K562 (cell line): ENCODE measurements at regions of chr1 and their contacts with region 1.

Region 1: DNA sequence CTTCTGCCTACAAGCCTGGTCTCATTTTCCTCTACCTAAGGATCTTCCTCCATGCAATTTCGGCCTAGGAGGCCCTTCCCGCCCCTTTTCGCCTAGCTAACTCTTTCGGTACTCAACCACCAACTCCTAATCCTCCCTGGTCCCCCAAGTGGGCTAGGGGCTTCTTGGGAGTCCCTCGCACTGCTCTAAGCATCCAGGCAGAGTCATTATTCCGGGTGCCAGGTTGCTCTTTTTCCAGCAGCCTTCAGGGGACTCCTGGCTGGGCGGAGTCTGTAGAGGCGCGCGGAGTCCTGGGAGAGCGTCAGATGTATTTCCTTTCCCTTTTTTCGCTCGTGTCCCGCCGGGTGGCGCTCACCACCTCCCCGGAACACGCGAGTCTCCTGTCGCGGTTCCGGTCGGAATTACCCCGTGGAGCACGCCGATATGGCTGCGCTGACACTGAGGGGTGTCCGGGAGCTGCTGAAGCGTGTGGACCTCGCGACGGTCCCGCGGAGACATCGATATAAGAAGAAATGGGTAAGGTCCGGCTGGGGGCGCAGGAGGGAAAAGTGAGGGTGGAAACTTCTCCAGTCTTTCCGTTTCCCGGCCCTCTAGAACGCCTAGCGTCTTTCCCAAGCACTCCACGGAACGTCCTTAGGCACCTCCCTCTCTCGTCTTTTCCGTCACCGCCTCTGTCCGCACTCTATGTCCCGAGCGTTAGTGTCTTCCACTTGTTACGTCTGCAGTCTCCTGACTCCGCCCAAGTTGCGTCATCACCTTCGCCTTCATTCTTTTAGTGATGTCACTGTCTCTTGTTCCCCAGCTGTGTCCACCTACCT is at the start of gene NSUN4:
- DNase-seq: peak; percentile 91 to 98 (median 92)
- ATAC-seq: peak; percentile 93
- H3K4me3 ChIP-seq: peak within 1 kb of the TSS; percentile 56
- H3K27ac ChIP-seq: peak within 1 kb of the TSS; percentile 96
- H3K4me1 ChIP-seq: peaks cover 22 to 26% of the 10 kb centered on the region in 2 experiments
- H3K27me3 ChIP-seq: no peaks in the 10 kb centered on the region
- CTCF ChIP-seq: peak; percentile 91 to 97 (median 92)
- EP300 ChIP-seq: peak; percentile 55
- POLR2A ChIP-seq: peak; percentile 98
- RAD21 ChIP-seq: peak; percentile 38 to 43
- polyA plus RNA-seq, gene NSUN4: 47.3 to 54.9 TPM

Region 2: GRCh38 chr1:46223472-46223943 is 117.1 kb before region 1 on chr1:
- CTCF ChIA-PET with region 1: no interaction called
- POLR2A ChIA-PET with region 1: interaction called, 4 read pairs
- in situ Hi-C with region 1: no loop called
- intact Hi-C with region 1: loop called (anchors 5 kb)
- DNase-seq: peak; percentile 69 to 91 (median 77)
- ATAC-seq: peak; percentile 97
- H3K4me3 ChIP-seq: no peak overlapping the region
- H3K27ac ChIP-seq: no peak overlapping the region
- H3K4me1 ChIP-seq: peaks cover 0 to 5% of the 10 kb centered on the region in 2 experiments; a peak in 2 of 5 replicates
- H3K27me3 ChIP-seq: no peaks in the 10 kb centered on the region
- CTCF ChIP-seq: peak; percentile 95 to 99 (median 97)
- EP300 ChIP-seq: no peak
- POLR2A ChIP-seq: no peak
- RAD21 ChIP-seq: peak; percentile 90 to 94

Region 3: DNA sequence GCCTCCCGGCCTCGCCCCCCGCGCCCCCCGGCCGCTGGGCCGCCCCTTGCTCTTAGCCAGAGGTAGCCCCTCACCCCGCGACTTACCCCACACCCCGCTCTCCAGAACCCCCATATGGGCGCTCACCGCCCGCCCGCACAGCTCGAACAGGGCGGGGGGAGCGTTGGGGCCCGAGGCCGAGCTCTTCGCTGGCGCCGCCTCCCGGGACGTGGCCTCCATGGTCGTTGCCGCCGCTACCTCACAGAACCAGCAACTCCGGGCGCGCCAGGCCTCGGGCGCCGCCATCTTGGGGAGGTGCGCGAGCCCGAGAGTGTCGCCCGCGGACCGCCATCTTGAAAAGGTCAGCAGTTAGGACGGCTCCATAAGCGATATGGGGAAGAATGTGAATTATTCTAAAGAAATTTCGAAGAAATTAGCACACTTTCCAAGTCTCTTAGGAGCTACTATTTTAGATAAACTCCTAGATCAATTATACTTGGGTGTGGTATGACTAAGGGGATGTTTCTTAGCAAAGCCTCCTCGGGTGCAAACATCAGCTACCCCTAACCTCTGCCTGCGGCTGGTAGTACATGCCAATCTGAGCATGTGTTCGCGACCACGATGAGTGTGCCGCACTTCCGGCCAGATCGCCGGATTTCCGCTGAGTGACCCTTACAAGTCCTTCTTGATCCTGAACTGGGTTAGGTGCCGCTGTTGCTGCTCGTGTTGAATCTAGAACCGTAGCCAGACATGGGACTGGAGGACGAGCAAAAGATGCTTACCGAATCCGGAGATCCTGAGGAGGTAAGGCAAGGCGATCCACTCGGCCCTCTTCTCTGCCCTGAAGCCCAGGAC is 37.4 kb before region 1 on chr1 and contains the starts of genes LRRC41 and UQCRH:
- CTCF ChIA-PET with region 1: no interaction called
- POLR2A ChIA-PET with region 1: interaction called, 18 read pairs
- in situ Hi-C with region 1: no loop called
- intact Hi-C with region 1: loop called (anchors 1 kb)
- DNase-seq: peak; percentile 87 to 100 (median 92)
- ATAC-seq: peak; percentile 80
- H3K4me3 ChIP-seq: peak within 1 kb of the TSS; percentile 76
- H3K27ac ChIP-seq: peak within 1 kb of the TSS; percentile 96
- H3K4me1 ChIP-seq: peaks cover 36 to 44% of the 10 kb centered on the region in 2 experiments; a peak in 4 of 5 replicates
- H3K27me3 ChIP-seq: no peaks in the 10 kb centered on the region
- CTCF ChIP-seq: peak; percentile 20 to 46 (median 46); a peak in 3 of 6 replicates
- EP300 ChIP-seq: peak; percentile 15
- POLR2A ChIP-seq: peak; percentile 98
- RAD21 ChIP-seq: 0 out of 4 replicates have a peak, but pooled peaks of 1 of the 2 experiments have one; percentile 2
- polyA plus RNA-seq, gene LRRC41: 10.5 to 11.7 TPM
- polyA plus RNA-seq, gene UQCRH: 4,348 to 5,184 TPM

Region 4: GRCh38 chr1:46352363-46352762 is 11.8 kb after region 1 on chr1:
- CTCF ChIA-PET with region 1: interaction called, 3 read pairs
- POLR2A ChIA-PET with region 1: interaction called, 11 read pairs
- in situ Hi-C with region 1: no loop called
- intact Hi-C with region 1: no loop called
- DNase-seq: no peak
- ATAC-seq: no peak
- H3K4me3 ChIP-seq: no peak overlapping the region
- H3K27ac ChIP-seq: no peak overlapping the region
- H3K4me1 ChIP-seq: peaks cover 0 to 7% of the 10 kb centered on the region in 2 experiments; a peak in 3 of 5 replicates
- H3K27me3 ChIP-seq: no peaks in the 10 kb centered on the region
- CTCF ChIP-seq: no peak
- EP300 ChIP-seq: no peak
- POLR2A ChIP-seq: 0 out of 2 replicates have a peak, but pooled peaks have one; percentile 51
- RAD21 ChIP-seq: no peak

Region 5: DNA sequence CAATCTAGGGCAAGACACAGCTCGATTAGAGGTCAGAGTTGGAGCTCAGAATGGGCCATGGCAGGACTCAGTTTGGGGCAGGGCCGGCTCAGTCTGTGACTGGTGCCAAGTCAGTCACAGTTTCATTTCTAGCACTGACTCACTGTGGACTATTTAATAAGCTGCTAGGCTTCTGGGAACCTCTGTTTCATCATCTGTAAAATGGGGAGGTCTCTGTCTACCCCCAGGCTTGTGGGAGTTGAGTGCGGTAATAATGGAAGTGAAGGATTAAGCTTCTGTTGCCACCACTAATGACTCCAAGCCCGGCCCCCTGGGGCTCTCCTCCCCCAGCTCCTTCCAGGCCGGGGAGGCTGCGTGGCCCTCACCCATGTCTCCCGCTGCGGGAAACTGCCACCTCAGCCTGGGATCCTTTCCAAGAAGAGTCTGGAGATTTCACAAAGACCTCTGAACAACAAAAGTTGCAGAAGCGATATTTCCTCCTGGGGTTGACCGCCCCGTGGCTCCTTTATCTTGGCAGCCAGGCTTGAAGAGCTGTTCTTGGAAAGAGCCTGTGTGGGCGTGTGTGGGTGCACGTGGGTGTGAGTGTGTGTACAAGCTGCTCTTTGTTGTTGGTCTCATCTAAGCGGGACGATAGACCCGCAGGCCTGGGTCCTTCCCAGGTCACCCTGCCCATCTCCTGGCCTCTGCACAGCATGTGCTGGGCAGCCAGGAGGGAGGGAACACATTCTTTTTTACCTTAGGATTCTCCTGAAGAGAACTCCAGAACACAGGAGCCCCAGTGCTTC is 181.8 kb after region 1 on chr1:
- CTCF ChIA-PET with region 1: no interaction called
- POLR2A ChIA-PET with region 1: no interaction called
- in situ Hi-C with region 1: no loop called
- intact Hi-C with region 1: loop called (anchors 2 kb)
- DNase-seq: peak; percentile 89 to 99 (median 93)
- ATAC-seq: peak; percentile 77
- H3K4me3 ChIP-seq: no peak overlapping the region
- H3K27ac ChIP-seq: peak overlapping the region; percentile 85
- H3K4me1 ChIP-seq: peaks cover 89 to 95% of the 10 kb centered on the region in 2 experiments
- H3K27me3 ChIP-seq: no peaks in the 10 kb centered on the region
- CTCF ChIP-seq: no peak
- EP300 ChIP-seq: peak; percentile 95
- POLR2A ChIP-seq: 0 out of 2 replicates have a peak, but pooled peaks have one; percentile 26
- RAD21 ChIP-seq: peak; percentile 12 to 40; a peak in 3 of 4 replicates

Region 6: GRCh38 chr1:46569884-46570725 is 229.5 kb after region 1 on chr1:
- CTCF ChIA-PET with region 1: no interaction called
- POLR2A ChIA-PET with region 1: no interaction called
- in situ Hi-C with region 1: no loop called
- intact Hi-C with region 1: no loop called
- DNase-seq: no peak
- ATAC-seq: no peak
- H3K4me3 ChIP-seq: no peak overlapping the region
- H3K27ac ChIP-seq: no peak overlapping the region
- H3K4me1 ChIP-seq: no peaks in the 10 kb centered on the region; a peak in 2 of 5 replicates
- H3K27me3 ChIP-seq: no peaks in the 10 kb centered on the region
- CTCF ChIP-seq: no peak
- EP300 ChIP-seq: no peak
- POLR2A ChIP-seq: no peak
- RAD21 ChIP-seq: no peak